ENCODE measurements at regions of chr16 and their contacts with region 1.

Region 1: GRCh38 chr16:30585400-30586189 is at the start of gene ZNF785:
- DNase-seq: peak; percentile 97 to 98
- H3K4me3 ChIP-seq: peak within 1 kb of the TSS; percentile 89
- H3K27ac ChIP-seq: peak within 1 kb of the TSS; percentile 57
- H3K4me1 ChIP-seq: peaks cover 12% of the 10 kb centered on the region; the same call in 1 of the 2 replicates
- H3K27me3 ChIP-seq: no peaks in the 10 kb centered on the region
- CTCF ChIP-seq: peak; percentile 46
- total RNA-seq, gene ZNF785: 30.9 and 39.8 TPM in 2 replicates

Region 2: GRCh38 chr16:30534368-30535105 is 51.1 kb before region 1 on chr16 and contains the start of gene ZNF747:
- CTCF ChIA-PET with region 1: no interaction called
- POLR2A ChIA-PET with region 1: interaction called, 12 read pairs
- intact Hi-C with region 1: loop called (anchors 1 kb)
- DNase-seq: peak; percentile 72 to 92
- H3K4me3 ChIP-seq: peak within 1 kb of the TSS; percentile 73
- H3K27ac ChIP-seq: peak within 1 kb of the TSS; percentile 57
- H3K4me1 ChIP-seq: peaks cover 30% of the 10 kb centered on the region
- H3K27me3 ChIP-seq: no peaks in the 10 kb centered on the region
- CTCF ChIP-seq: peak; percentile 29; the same call in 1 of the 2 replicates
- total RNA-seq, gene ZNF747: 14.5 and 17.9 TPM in 2 replicates

Region 3: DNA sequence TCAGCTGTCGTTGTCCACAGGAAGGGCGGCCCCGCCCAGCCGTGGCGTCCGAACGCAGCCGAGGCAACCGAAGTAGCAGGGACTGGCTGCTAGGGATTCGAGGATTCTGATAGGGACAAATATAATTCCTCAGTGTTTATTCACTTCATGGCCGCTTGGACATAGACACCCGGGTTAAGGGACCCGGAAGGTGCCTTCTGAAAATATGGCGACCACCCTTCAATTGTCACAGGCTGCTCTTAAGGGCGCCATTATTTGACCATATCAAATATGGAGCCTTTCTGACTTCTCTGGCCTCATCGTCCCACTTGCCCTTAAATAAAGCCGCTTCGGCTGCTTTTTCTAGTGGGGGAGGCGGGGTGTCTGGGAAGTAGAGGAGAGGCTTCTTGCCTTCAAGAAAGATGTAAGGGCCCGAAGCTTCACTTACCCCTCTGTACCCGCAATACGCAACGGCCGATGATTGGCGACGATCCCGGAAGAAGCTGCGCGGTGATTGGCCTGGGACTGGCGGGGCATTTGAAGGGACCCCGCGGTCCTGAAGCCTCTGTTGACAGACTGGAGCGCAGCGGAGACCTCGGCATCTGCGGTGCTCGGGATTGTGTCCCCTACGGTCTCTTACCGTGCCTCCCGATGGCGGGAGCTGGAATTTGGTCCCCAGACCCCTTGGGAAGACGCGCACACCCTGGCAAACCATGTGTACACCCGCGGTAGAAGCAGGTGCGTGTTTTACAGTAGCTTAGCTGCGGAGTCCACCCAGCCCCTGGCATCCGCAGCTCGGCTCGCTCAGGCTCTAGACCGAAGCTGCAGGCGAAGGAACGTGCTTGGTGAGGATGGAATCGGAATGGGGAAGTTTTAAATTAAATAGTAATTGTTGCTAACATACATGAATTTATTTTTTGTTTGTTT is 13.6 kb before region 1 on chr16 and contains the start of gene ZNF688:
- CTCF ChIA-PET with region 1: interaction called, 5 read pairs
- POLR2A ChIA-PET with region 1: interaction called, 8 read pairs
- intact Hi-C with region 1: loop called (anchors 1 kb)
- DNase-seq: peak; percentile 93 to 94
- H3K4me3 ChIP-seq: peak within 1 kb of the TSS; percentile 89
- H3K27ac ChIP-seq: peak within 1 kb of the TSS; percentile 61
- H3K4me1 ChIP-seq: peaks cover 40% of the 10 kb centered on the region
- H3K27me3 ChIP-seq: no peaks in the 10 kb centered on the region
- CTCF ChIP-seq: no peak
- total RNA-seq, gene ZNF688: 13.1 and 25.7 TPM in 2 replicates

Region 4: GRCh38 chr16:30637942-30638341 is 52.3 kb after region 1 on chr16:
- CTCF ChIA-PET with region 1: no interaction called
- POLR2A ChIA-PET with region 1: no interaction called
- intact Hi-C with region 1: no loop called
- DNase-seq: peak; percentile 31 to 67
- H3K4me3 ChIP-seq: no peak overlapping the region
- H3K27ac ChIP-seq: no peak overlapping the region
- H3K4me1 ChIP-seq: peaks cover 13% of the 10 kb centered on the region; the same call in 1 of the 2 replicates
- H3K27me3 ChIP-seq: no peaks in the 10 kb centered on the region
- CTCF ChIP-seq: peak; percentile 73

Measured in PC-9 (cell line).